CD4-positive, alpha-beta memory T cell (primary cell): ENCODE measurements at regions of chr12 and their contacts with region 1.

Region 1: DNA sequence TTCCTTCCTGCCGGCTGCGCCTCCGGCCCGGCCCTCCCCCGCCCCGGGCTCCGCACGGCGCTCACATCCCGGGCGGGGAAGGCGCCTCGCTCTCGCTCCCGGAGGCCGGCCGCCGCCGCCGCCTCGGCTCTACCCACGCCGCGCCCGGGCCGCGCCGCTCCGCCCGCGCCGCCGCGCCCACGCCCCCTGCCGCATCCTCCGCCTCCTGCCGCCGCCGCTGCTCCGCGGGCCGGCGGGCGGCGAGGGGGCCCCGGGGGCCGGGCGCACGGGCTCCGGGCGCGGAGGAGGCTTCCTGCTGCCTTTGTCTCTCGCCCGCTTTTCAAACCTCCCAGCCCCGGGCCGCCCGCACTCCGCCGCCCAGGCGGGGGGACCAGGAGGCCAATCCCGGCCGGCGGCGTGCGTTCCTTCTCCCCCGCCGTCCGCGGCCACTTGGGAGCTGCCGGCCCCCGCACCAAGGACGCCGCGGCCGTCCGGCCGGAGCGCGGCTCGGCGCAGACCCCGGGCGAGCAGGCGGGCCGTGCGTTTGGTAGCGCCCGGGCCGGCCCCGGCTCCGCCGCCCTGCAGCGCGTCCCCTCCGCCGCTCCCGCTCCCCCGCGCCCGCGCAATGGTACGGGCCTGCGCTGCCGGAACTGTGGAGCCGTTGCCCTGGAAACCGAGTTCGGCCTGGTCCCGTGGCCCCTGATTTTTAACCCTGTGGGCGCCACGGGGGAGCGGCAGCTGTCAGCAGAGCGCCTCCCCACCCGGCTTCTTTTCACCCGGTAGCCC is at the start of gene FBXL14:
- DNase-seq: peak; percentile 91 to 93 (median 92)
- H3K4me3 ChIP-seq: peak within 1 kb of the TSS; percentile 77 to 95
- H3K4me3 Mint-ChIP-seq: peak within 1 kb of the TSS; percentile 92 to 96 (median 94)
- H3K27ac ChIP-seq: peak within 1 kb of the TSS; percentile 68
- H3K27ac Mint-ChIP-seq: peak within 1 kb of the TSS; percentile 92 to 99 (median 98)
- H3K4me1 ChIP-seq: peaks cover 42% of the 10 kb centered on the region
- H3K4me1 Mint-ChIP-seq: peaks cover 34 to 68% (median 42%) of the 10 kb centered on the region in 4 donors
- H3K27me3 ChIP-seq: no peaks in the 10 kb centered on the region
- H3K27me3 Mint-ChIP-seq: no peaks in the 10 kb centered on the region
- total RNA-seq, gene FBXL14: 41.6 to 43.4 TPM

Region 2: DNA sequence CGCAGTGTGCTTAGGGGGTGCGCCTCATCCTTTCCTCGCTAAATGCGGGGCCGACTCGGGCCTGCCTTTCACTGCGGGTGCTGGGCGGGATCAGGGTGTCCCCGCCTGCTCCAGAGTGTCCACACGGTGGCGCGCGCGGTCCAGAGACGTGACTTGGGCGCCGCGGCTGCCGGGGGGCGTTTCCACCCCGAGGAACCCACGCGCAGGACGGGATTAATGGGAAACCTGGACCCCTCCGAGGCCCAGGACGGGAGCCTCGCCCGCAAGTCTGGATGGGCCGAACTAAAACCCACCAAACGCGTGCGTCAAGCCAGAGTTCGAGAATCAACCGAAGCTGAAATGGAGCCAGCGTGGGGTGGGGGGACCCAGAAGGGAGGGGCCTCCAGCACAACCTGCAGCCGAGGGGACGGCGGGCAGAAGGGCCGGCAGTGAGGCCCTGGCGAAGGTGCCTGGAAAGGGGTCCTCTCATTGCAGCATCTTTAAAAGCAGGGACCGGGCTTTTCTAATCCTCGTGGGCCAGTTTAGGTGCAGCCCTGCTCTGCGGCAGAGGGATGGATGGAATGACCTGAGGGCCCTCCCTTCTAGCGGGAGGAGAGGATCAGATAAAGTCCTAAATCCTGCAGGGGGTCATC is 1024.5 kb before region 1 on chr12:
- CTCF ChIA-PET with region 1: no interaction called
- POLR2A ChIA-PET with region 1: no interaction called
- intact Hi-C with region 1: loop called (anchors 5 kb)
- DNase-seq: peak; percentile 79 to 84 (median 82)
- H3K4me3 ChIP-seq: peak overlapping the region; percentile 52 to 65
- H3K4me3 Mint-ChIP-seq: peak overlapping the region; percentile 78 to 90 (median 86)
- H3K27ac ChIP-seq: peak overlapping the region; percentile 47
- H3K27ac Mint-ChIP-seq: peak overlapping the region in 6 of 7 donors; percentile 64 to 88 (median 80)
- H3K4me1 ChIP-seq: peaks cover 43% of the 10 kb centered on the region
- H3K4me1 Mint-ChIP-seq: peaks cover 35 to 54% (median 42%) of the 10 kb centered on the region in 4 donors
- H3K27me3 ChIP-seq: no peaks in the 10 kb centered on the region
- H3K27me3 Mint-ChIP-seq: no peaks in the 10 kb centered on the region

Region 3: GRCh38 chr12:1204581-1205121 is 389.8 kb before region 1 on chr12:
- CTCF ChIA-PET with region 1: no interaction called
- POLR2A ChIA-PET with region 1: interaction called, 3 read pairs
- intact Hi-C with region 1: loop called (anchors 10 kb)
- DNase-seq: peak in 4 of 5 donors; percentile 23 to 45 (median 39)
- H3K4me3 ChIP-seq: peak overlapping the region; percentile 31 to 55
- H3K4me3 Mint-ChIP-seq: no peak overlapping the region
- H3K27ac ChIP-seq: peak overlapping the region; percentile 42
- H3K27ac Mint-ChIP-seq: no peak overlapping the region
- H3K4me1 ChIP-seq: peaks cover 19% of the 10 kb centered on the region
- H3K4me1 Mint-ChIP-seq: peaks cover 5 to 9% (median 8%) of the 10 kb centered on the region in 4 donors
- H3K27me3 ChIP-seq: no peaks in the 10 kb centered on the region
- H3K27me3 Mint-ChIP-seq: no peaks in the 10 kb centered on the region

Region 4: DNA sequence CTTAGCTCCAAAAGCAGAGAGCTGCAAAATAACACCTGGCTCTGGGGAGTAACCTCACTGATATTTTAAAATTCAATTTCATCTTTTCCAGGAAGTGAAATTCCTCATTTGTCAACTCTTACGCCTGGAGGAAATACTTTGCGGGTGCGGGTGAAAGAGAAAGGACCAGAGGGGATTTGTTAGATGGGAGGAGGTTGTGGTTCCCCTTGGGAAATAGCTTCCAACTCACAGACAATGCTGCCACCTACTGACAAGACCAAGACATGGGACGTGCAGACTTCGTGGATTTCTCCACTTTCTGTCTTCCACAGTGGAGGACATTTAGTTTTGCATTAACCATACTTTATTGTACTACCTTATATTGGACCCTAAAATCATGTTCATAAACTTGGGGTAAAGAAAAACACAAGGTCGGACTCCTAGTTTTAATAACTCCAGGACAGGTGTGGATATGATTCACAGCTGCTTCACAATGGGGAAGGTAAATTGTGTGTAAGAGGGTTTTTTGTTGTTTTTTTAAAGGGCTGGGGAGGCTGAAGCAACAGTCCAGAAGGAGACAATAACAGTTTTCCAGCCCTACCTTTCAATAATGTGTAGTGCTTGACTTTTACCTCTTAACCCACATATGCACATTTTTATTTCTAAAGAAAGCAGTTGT is 10.9 kb before region 1 on chr12:
- CTCF ChIA-PET with region 1: interaction called, 33 read pairs
- POLR2A ChIA-PET with region 1: interaction called, 20 read pairs
- intact Hi-C with region 1: no loop called
- DNase-seq: peak; percentile 60 to 68 (median 67)
- H3K4me3 ChIP-seq: no peak overlapping the region
- H3K4me3 Mint-ChIP-seq: peak overlapping the region in 2 of 8 donors; percentile 45 to 51
- H3K27ac ChIP-seq: no peak overlapping the region
- H3K27ac Mint-ChIP-seq: peak overlapping the region in 5 of 7 donors; percentile 35 to 81 (median 72)
- H3K4me1 ChIP-seq: peaks cover 21% of the 10 kb centered on the region
- H3K4me1 Mint-ChIP-seq: peaks cover 14 to 22% (median 19%) of the 10 kb centered on the region in 4 donors
- H3K27me3 ChIP-seq: no peaks in the 10 kb centered on the region
- H3K27me3 Mint-ChIP-seq: no peaks in the 10 kb centered on the region

Region 5: GRCh38 chr12:1661553-1662335 is 67.3 kb after region 1 on chr12:
- CTCF ChIA-PET with region 1: no interaction called
- POLR2A ChIA-PET with region 1: interaction called, 11 read pairs
- intact Hi-C with region 1: no loop called
- DNase-seq: peak; percentile 84 to 92 (median 90)
- H3K4me3 ChIP-seq: peak overlapping the region in 1 of 2 donors; percentile 49
- H3K4me3 Mint-ChIP-seq: peak overlapping the region; percentile 72 to 84 (median 82)
- H3K27ac ChIP-seq: no peak overlapping the region
- H3K27ac Mint-ChIP-seq: peak overlapping the region; percentile 88 to 93 (median 91)
- H3K4me1 ChIP-seq: peaks cover 16% of the 10 kb centered on the region
- H3K4me1 Mint-ChIP-seq: peaks cover 22 to 55% (median 29%) of the 10 kb centered on the region in 4 donors
- H3K27me3 ChIP-seq: no peaks in the 10 kb centered on the region
- H3K27me3 Mint-ChIP-seq: no peaks in the 10 kb centered on the region